Sciatic nerve (tissue), 2 donors: ENCODE measurements at regions of chr3 and their contacts with region 1.

Region 1: DNA sequence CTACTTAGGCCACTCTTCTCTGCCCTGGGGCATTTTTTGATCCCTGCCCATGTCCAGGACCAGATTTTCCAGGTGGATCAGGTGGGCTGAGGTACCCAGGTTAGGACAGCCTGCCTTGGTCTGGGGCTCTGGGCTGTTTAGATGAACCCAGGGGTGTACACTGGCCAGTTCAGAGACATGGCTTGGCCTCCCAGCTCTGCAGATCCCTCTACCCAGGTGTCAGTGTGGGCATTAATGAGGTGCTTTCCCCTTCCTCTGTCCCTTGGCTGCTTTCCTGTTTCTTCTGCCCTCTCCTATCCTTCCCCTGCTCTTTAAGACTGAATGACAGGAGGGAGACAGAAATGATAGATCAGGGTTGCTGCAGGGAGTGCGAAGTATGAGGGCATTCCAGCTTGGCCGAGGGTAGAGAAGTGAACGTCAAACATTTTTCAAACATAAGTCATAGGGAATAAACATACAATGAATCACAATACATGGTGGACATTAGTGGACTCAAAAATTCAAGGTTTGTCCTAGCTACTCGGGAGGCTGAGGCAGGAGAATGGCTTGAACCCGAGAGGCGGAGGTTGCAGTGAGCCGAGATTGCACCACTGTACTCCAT is 30.5 kb downstream of the RTP1 start:
- DNase-seq: no peak
- ATAC-seq: no peak

Region 2: GRCh38 chr3:187291001-187291511 is 63.3 kb after region 1 on chr3:
- intact Hi-C with region 1: loop called (anchors 10 kb)
- DNase-seq: no peak
- ATAC-seq: peak; percentile 64

Region 3: GRCh38 chr3:188520466-188520865 is 1292.7 kb after region 1 on chr3:
- intact Hi-C with region 1: no loop called
- DNase-seq: no peak
- ATAC-seq: peak; percentile 8